ENCODE measurements at regions of chr14 and their contacts with region 1.

Region 1: GRCh38 chr14:23034483-23035302 is at the start of gene PSMB5:
- DNase-seq: peak; percentile 96
- H3K4me3 Mint-ChIP-seq: peak within 1 kb of the TSS; percentile 88
- H3K27ac Mint-ChIP-seq: peak within 1 kb of the TSS; percentile 96
- H3K4me1 Mint-ChIP-seq: peaks cover 34% of the 10 kb centered on the region
- H3K27me3 Mint-ChIP-seq: no peaks in the 10 kb centered on the region
- total RNA-seq, gene PSMB5: 120 to 125 TPM

Region 2: DNA sequence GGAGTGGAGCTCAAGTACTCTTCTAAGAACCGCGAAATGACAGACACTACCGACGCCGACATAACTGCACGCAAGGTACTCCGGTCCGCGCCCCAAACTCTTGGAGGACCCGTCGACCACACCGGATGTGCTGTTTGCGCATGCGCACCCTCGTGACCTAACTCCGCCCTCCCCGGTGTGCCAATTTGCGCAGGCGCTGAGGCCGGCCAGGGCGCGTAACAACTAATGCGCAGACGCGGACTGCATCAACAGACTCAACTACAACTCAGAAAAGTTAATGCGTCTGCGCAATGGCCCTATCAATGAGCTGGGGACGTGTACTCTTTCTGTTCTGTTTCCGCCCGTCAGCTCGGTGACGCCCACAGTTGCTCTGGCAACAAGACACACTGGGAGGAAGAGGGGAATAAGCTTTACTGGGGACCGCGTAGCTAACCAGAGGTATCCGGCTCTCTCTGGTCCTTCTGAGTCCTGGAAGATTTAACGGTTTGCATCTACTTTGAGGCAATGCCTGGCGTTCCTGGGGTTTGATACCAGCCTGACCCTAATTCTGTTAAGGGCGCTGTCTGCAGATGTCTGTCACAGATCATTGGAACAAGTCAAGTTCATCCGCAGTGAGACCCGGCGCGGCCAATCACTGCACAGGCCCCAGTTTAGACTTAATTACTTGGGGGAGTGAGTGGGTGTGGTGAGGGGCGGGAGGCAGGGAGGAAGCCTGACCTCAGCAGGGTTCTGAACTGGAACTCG is 445.4 kb before region 1 on chr14 and contains the start of gene DAD1:
- CTCF ChIA-PET with region 1: no interaction called
- intact Hi-C with region 1: loop called (anchors 1 kb)
- DNase-seq: peak; percentile 100
- H3K4me3 Mint-ChIP-seq: peak within 1 kb of the TSS; percentile 98
- H3K27ac Mint-ChIP-seq: peak within 1 kb of the TSS; percentile 99
- H3K4me1 Mint-ChIP-seq: peaks cover 68% of the 10 kb centered on the region
- H3K27me3 Mint-ChIP-seq: no peaks in the 10 kb centered on the region
- total RNA-seq, gene DAD1: 219 to 226 TPM

Measured in activated naive CD4-positive, alpha-beta T cell treated with anti-CD3 and anti-CD28 coated beads for 36 hours (primary cell).